ENCODE measurements at regions of chr12 and their contacts with region 1.

Region 1: GRCh38 chr12:120737557-120738251 is 12.1 kb downstream of the ACADS start:
- DNase-seq: peak; percentile 69
- ATAC-seq: peak; percentile 92
- H3K4me3 Mint-ChIP-seq: no peak overlapping the region
- H3K27ac Mint-ChIP-seq: no peak overlapping the region
- H3K4me1 Mint-ChIP-seq: no peaks in the 10 kb centered on the region
- H3K27me3 Mint-ChIP-seq: no peaks in the 10 kb centered on the region
- CTCF ChIP-seq: peak; percentile 43; the same call in 1 of the 2 replicates

Region 2: DNA sequence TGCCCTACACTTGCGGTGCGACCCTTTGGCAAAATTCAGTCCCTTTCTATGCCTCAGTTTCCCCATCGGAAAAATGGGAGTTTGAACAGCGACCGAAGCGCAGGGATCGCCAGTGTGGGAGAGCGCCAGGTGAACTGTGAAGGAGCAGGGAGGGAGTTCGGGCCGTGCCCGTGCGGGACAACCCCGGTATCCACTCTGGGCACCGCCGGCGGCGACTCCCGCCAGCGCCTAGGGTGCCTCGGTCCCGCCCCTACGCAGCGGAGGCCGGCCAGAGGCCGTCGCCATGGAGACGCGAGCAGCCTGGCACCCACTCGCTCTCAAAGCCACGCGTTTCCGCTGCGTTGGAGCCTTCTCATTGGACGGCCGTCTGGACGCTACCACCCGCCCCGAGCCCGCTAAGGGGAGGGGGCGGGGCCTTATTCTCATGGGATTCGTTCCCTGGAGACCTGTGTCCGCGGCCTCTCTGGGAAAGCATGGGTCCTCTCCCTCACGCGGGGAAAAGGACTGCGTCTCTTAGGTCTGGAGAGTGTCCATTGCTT is 51.5 kb before region 1 on chr12:
- CTCF ChIA-PET with region 1: no interaction called
- POLR2A ChIA-PET with region 1: no interaction called
- DNase-seq: peak; percentile 97
- ATAC-seq: peak; percentile 83
- H3K4me3 Mint-ChIP-seq: peak overlapping the region; percentile 86
- H3K27ac Mint-ChIP-seq: peak overlapping the region; percentile 96
- H3K4me1 Mint-ChIP-seq: peaks cover 32% of the 10 kb centered on the region
- H3K27me3 Mint-ChIP-seq: no peaks in the 10 kb centered on the region
- CTCF ChIP-seq: no peak

Region 3: GRCh38 chr12:120750806-120751205 is 13.1 kb after region 1 on chr12:
- CTCF ChIA-PET with region 1: interaction called, 11 read pairs
- POLR2A ChIA-PET with region 1: interaction called, 3 read pairs
- DNase-seq: no peak
- ATAC-seq: no peak
- H3K4me3 Mint-ChIP-seq: no peak overlapping the region
- H3K27ac Mint-ChIP-seq: no peak overlapping the region
- H3K4me1 Mint-ChIP-seq: no peaks in the 10 kb centered on the region
- H3K27me3 Mint-ChIP-seq: no peaks in the 10 kb centered on the region
- CTCF ChIP-seq: no peak

Region 4: GRCh38 chr12:120822832-120823503 is 85.3 kb after region 1 on chr12:
- CTCF ChIA-PET with region 1: interaction called, 10 read pairs
- POLR2A ChIA-PET with region 1: no interaction called
- DNase-seq: peak; percentile 39
- ATAC-seq: peak; percentile 89
- H3K4me3 Mint-ChIP-seq: no peak overlapping the region; the same call in 1 of the 2 replicates
- H3K27ac Mint-ChIP-seq: peak overlapping the region; percentile 85
- H3K4me1 Mint-ChIP-seq: peaks cover 27% of the 10 kb centered on the region
- H3K27me3 Mint-ChIP-seq: no peaks in the 10 kb centered on the region
- CTCF ChIP-seq: no peak